ENCODE measurements at regions of chr12 and their contacts with region 1.

Region 1: DNA sequence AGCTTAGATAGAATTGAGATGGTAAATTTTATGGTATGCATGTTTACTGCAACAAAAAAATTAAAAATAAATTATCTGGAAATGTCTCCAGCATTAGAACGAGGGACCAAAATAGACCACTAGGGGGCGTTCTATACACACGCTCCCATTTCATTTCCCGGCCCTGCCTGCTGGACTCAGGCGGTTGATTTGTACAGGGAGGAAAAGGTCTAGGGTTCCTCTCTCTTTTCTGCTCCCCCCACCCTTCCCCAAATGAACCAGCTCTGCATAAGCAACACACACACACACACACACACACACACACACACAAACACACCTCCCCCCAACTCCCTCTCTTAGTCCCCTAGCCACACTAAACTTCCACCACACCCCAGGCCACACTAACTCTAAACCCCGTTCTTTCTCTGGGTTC is 7.8 kb upstream of the DTX1 start:
- DNase-seq: peak; percentile 52 to 71
- H3K4me3 ChIP-seq: no peak overlapping the region
- H3K4me3 Mint-ChIP-seq: no peak overlapping the region
- H3K27ac Mint-ChIP-seq: no peak overlapping the region
- H3K4me1 ChIP-seq: no peaks in the 10 kb centered on the region
- H3K4me1 Mint-ChIP-seq: no peaks in the 10 kb centered on the region
- H3K27me3 ChIP-seq: no peaks in the 10 kb centered on the region
- H3K27me3 Mint-ChIP-seq: peaks cover 10% of the 10 kb centered on the region
- CTCF ChIP-seq: peak; percentile 74 to 80

Region 2: DNA sequence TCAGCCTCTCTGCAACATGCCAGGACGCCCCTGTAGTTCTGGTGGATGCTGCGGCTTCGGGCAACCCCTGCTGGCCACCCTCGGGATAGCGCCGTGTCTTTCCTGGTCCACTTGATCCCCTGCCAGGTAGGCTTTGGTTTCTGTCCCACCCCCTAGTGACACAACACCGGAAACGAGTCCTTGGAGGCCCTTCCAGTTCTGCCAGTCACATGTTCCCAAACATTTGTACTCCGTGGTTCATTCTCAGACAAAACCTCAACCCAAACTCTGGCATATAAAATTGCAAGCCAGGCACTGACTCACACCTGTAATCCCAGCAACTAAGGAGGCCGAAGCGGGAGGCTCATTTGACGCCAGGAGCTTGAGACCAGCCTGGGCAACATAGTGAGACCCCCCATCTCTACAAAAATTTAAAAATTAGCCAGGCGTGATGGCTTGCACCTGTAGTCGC is 49.7 kb after region 1 on chr12:
- CTCF ChIA-PET with region 1: interaction called, 3 read pairs
- POLR2A ChIA-PET with region 1: no interaction called
- intact Hi-C with region 1: loop called (anchors 1 kb)
- DNase-seq: peak; percentile 81 to 86
- H3K4me3 ChIP-seq: no peak overlapping the region
- H3K4me3 Mint-ChIP-seq: no peak overlapping the region
- H3K27ac Mint-ChIP-seq: no peak overlapping the region
- H3K4me1 ChIP-seq: 0 out of 2 replicates have a peak, but pooled peaks cover 4% of the 10 kb centered on the region
- H3K4me1 Mint-ChIP-seq: no peaks in the 10 kb centered on the region
- H3K27me3 ChIP-seq: no peaks in the 10 kb centered on the region; the same call in 1 of the 2 replicates
- H3K27me3 Mint-ChIP-seq: peaks cover 7% of the 10 kb centered on the region
- CTCF ChIP-seq: peak; percentile 64 to 70

Region 3: DNA sequence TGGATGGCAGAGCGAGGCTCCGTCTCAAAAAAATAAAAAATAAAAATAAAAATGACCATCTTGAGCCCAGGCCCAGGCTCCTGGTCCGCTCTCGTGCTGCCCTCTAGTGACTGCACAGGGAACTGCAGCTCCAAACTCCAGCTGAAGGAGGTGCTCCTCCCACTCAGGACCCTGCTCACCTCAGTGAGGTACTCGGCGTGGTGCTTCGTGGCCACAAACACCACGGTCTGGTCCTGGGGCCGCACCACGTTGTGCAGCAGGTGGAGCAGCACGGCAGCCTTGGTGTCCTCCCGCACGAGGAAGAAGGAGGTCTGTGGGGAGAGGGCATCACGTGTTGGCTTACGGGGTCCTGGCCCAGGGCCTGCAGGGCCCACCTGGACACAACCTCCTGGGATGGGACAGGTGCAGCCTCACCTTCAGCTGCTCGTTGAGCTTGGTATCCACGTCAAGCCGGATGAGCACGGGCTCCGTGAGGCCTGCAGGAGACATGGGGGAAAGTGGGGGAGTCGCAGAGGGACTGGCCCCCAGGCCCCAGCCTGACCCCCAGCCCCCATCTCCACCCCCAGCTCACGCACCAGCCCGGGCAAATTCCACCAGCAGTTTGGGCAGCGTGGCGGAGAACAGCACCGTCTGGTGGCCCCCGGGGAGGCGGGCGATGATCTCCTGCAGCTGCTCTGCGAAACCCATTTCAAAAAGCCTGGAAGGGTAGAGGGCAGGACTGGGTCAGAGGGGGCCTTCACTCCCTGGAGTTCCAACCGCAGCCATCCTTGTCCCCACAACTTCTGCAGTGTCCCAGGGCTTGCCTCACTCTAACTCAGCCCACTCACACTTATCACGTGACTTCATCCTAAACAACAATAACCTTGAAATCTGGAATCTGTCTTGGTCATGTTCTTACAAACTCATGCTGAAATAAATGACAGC is 126.0 kb after region 1 on chr12:
- CTCF ChIA-PET with region 1: no interaction called
- POLR2A ChIA-PET with region 1: no interaction called
- intact Hi-C with region 1: loop called (anchors 1 kb)
- DNase-seq: peak; percentile 74 to 83
- H3K4me3 ChIP-seq: no peak overlapping the region
- H3K4me3 Mint-ChIP-seq: no peak overlapping the region
- H3K27ac Mint-ChIP-seq: peak overlapping the region; percentile 48
- H3K4me1 ChIP-seq: no peaks in the 10 kb centered on the region
- H3K4me1 Mint-ChIP-seq: no peaks in the 10 kb centered on the region
- H3K27me3 ChIP-seq: no peaks in the 10 kb centered on the region
- H3K27me3 Mint-ChIP-seq: no peaks in the 10 kb centered on the region
- CTCF ChIP-seq: peak; percentile 91 to 96

Measured in Caco-2 (cell line).